ENCODE measurements at regions of chr10 and their contacts with region 1.

Region 1: DNA sequence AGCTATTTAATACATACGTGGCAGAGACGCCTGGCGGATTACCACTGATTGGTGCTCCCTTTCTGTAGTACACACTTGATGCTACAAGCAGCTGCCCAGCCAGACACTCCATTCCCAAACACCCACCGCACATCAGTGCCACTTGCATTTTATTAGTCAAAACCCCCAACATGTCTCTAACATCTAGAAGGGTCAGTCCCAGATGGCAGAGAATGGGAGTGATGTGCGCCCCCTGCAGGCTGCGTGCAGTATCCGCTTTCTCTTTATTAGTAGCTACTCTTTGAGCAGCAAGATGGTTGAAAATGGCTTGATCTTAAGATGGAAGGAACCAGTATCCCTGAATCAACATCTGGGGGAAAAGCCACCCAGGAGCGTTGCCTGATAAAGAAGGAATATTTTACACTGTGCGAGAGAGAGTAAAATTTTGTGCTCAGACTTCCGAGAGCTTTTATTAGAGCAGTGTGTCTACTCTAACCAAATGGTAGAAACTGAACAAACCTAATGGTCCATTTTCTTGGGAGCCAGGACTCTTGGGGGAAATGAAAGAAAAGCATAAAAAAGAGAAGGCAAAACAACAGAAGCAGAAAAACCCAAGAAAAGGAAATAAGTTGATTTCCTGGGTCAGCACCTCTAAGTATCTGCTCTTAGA is 78.3 kb downstream of the ST8SIA6 start:
- DNase-seq: peak; percentile 2
- H3K4me3 ChIP-seq: no peak overlapping the region
- H3K27ac ChIP-seq: no peak overlapping the region
- H3K4me1 ChIP-seq: no peaks in the 10 kb centered on the region
- H3K27me3 ChIP-seq: no peaks in the 10 kb centered on the region
- CTCF ChIP-seq: peak; percentile 41 to 71
- POLR2A ChIP-seq: no peak

Region 2: GRCh38 chr10:17365402-17365801 is 10.7 kb before region 1 on chr10:
- CTCF ChIA-PET with region 1: interaction called, 30 read pairs
- POLR2A ChIA-PET with region 1: no interaction called
- dilution Hi-C with region 1: no loop called
- intact Hi-C with region 1: no loop called
- DNase-seq: no peak
- H3K4me3 ChIP-seq: no peak overlapping the region
- H3K27ac ChIP-seq: no peak overlapping the region
- H3K4me1 ChIP-seq: no peaks in the 10 kb centered on the region
- H3K27me3 ChIP-seq: peaks cover 0 to 2% of the 10 kb centered on the region in 2 experiments
- CTCF ChIP-seq: no peak
- POLR2A ChIP-seq: no peak

Region 3: DNA sequence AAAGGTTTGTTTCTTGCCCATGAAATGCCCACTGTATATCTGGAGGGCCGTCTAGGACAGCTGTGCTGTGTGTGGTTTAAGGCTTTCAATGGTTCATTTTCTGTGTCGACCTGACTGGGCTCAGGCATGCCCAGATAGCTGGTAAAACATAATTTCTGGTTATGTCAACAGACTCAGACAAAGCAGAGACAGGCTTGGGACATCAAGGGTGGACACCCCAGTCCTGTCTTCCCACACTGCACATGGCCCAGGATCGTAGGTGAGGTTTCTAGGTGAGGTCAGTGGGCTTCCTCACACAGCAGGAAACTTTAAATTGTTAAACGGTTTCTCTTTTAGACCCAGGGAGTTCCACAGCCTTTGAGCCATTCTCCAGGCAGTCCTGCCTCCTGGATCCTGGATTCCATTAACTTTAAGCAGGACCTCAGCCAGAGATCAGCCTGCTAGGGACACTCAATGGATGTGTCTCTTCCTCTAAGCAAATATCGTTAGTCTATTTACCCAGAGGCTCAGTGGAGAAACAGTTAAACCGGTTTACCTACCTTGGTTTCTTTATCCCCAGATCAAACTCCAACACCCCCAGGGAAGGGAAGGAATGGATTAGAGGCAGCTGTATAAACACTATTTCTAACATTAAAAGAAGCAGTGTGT is 11.9 kb after region 1 on chr10:
- CTCF ChIA-PET with region 1: interaction called, 18 read pairs
- POLR2A ChIA-PET with region 1: no interaction called
- dilution Hi-C with region 1: no loop called
- intact Hi-C with region 1: no loop called
- DNase-seq: no peak
- H3K4me3 ChIP-seq: no peak overlapping the region
- H3K27ac ChIP-seq: no peak overlapping the region
- H3K4me1 ChIP-seq: no peaks in the 10 kb centered on the region
- H3K27me3 ChIP-seq: no peaks in the 10 kb centered on the region
- CTCF ChIP-seq: no peak
- POLR2A ChIP-seq: no peak